GM12878 (cell line): ENCODE measurements at regions of chr19 and their contacts with region 1.

Region 1: GRCh38 chr19:20273376-20273775 is 106.4 kb downstream of the ZNF486 start:
- DNase-seq: no peak
- ATAC-seq: no peak
- H3K4me3 ChIP-seq: no peak overlapping the region
- H3K27ac ChIP-seq: no peak overlapping the region
- H3K4me1 ChIP-seq: no peaks in the 10 kb centered on the region
- H3K27me3 ChIP-seq: no peaks in the 10 kb centered on the region
- CTCF ChIP-seq: no peak
- EP300 ChIP-seq: no peak
- POLR2A ChIP-seq: no peak
- RAD21 ChIP-seq: no peak

Region 2: DNA sequence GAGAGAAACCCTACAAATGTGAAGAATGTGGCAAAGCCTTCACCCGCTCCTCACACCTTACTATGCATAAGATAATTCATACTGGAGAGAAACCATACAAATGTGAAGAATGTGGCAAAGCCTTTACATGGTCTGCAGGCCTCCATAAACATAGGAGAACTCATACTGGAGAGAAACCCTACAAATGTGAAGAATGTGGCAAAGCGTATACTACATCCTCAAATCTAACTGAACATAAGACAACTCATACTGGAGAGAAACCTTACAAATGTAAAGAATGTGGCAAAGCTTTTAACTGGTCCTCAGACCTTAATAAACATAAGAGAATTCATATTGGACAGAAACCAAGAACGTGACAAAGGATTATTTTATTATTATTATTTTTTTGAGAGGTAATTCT is 75.6 kb before region 1 on chr19:
- CTCF ChIA-PET with region 1: no interaction called
- POLR2A ChIA-PET with region 1: no interaction called
- RAD21 ChIA-PET with region 1: no interaction called
- SMC1A ChIA-PET with region 1: no interaction called
- in situ Hi-C with region 1: no loop called
- intact Hi-C with region 1: no loop called
- DNase-seq: no peak
- ATAC-seq: no peak
- H3K4me3 ChIP-seq: no peak overlapping the region
- H3K27ac ChIP-seq: no peak overlapping the region
- H3K4me1 ChIP-seq: no peaks in the 10 kb centered on the region
- H3K27me3 ChIP-seq: no peaks in the 10 kb centered on the region
- CTCF ChIP-seq: no peak
- EP300 ChIP-seq: no peak
- POLR2A ChIP-seq: no peak
- RAD21 ChIP-seq: no peak

Region 3: GRCh38 chr19:20423381-20424197 is 150.2 kb after region 1 on chr19:
- CTCF ChIA-PET with region 1: no interaction called
- POLR2A ChIA-PET with region 1: interaction called, 11 read pairs
- RAD21 ChIA-PET with region 1: no interaction called
- SMC1A ChIA-PET with region 1: no interaction called
- in situ Hi-C with region 1: no loop called
- intact Hi-C with region 1: no loop called
- DNase-seq: no peak
- ATAC-seq: peak; percentile 28; the same call in 1 of the 3 replicates
- H3K4me3 ChIP-seq: peak overlapping the region; percentile 61
- H3K27ac ChIP-seq: peak overlapping the region; percentile 64
- H3K4me1 ChIP-seq: no peaks in the 10 kb centered on the region
- H3K27me3 ChIP-seq: no peaks in the 10 kb centered on the region
- CTCF ChIP-seq: no peak
- EP300 ChIP-seq: no peak
- POLR2A ChIP-seq: no peak
- RAD21 ChIP-seq: no peak